K562 (cell line): ENCODE measurements at regions of chr1 and their contacts with region 1.

Region 1: GRCh38 chr1:26066857-26067256 is 573 bp downstream of the TRIM63 start:
- DNase-seq: peak; percentile 68 to 86 (median 73)
- ATAC-seq: peak; percentile 41
- H3K4me3 ChIP-seq: no peak overlapping the region
- H3K27ac ChIP-seq: peak overlapping the region; percentile 1; the same call in 2 of the 3 replicates
- H3K4me1 ChIP-seq: peaks cover 50 to 55% of the 10 kb centered on the region in 2 experiments
- H3K27me3 ChIP-seq: no peaks in the 10 kb centered on the region
- CTCF ChIP-seq: no peak
- EP300 ChIP-seq: peak; percentile 34; the same call in 1 of the 2 replicates
- POLR2A ChIP-seq: no peak
- RAD21 ChIP-seq: no peak

Region 2: GRCh38 chr1:26035959-26036755 is 30.7 kb before region 1 on chr1:
- CTCF ChIA-PET with region 1: no interaction called
- POLR2A ChIA-PET with region 1: interaction called, 6 read pairs
- in situ Hi-C with region 1: no loop called
- intact Hi-C with region 1: loop called (anchors 1 kb)
- DNase-seq: peak; percentile 91 to 94 (median 92)
- ATAC-seq: peak; percentile 92
- H3K4me3 ChIP-seq: peak overlapping the region; percentile 77
- H3K27ac ChIP-seq: peak overlapping the region; percentile 87
- H3K4me1 ChIP-seq: peaks cover 25 to 57% of the 10 kb centered on the region in 2 experiments
- H3K27me3 ChIP-seq: no peaks in the 10 kb centered on the region
- CTCF ChIP-seq: peak; percentile 97 to 99 (median 98)
- EP300 ChIP-seq: no peak; the same call in 1 of the 2 replicates
- POLR2A ChIP-seq: no peak
- RAD21 ChIP-seq: peak; percentile 99

Region 3: DNA sequence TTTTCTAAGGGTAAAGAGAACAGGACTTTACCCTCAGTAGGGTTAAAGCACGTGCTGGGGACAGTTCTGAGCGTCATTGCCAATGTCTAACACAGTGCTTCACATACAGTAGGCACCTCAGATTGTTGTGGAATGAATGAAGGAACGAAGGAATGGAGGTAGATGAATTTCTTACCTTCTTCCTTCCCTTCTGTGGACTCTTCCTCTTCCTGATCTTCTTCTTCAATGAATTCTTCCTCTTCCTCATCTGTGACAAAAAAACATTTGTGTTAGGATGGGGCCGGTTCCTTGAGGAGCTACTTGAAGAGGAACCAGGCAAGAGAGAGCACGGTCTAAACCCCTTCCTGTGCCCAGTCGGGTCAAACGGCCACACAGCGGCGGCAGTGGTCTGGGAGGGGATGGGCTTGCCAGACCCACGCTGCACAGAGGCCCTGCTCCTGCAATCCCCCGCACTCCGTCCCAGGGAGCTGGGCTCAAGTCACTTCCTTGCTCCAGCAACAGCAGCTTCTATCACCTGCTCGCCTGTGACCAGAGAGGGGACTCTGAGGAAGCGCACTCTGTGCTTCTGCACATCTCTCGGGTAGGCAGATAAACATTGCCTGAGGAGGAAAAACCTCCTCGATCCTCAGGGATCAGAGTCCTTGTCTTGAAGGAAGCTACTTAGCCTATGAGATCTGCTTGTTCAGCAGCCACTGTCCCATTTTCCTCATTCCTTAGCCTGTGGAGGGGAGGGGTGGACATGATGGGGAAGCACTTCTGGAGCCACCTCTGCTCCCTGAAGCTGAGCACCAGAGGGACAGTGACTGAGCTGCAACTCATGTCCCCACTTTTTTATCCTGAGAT is 12.9 kb before region 1 on chr1:
- CTCF ChIA-PET with region 1: no interaction called
- POLR2A ChIA-PET with region 1: interaction called, 28 read pairs
- in situ Hi-C with region 1: no loop called
- intact Hi-C with region 1: no loop called
- DNase-seq: peak; percentile 45 to 55 (median 46)
- ATAC-seq: peak; percentile 69
- H3K4me3 ChIP-seq: no peak overlapping the region
- H3K27ac ChIP-seq: no peak overlapping the region
- H3K4me1 ChIP-seq: peaks cover 14 to 21% of the 10 kb centered on the region in 2 experiments
- H3K27me3 ChIP-seq: no peaks in the 10 kb centered on the region
- CTCF ChIP-seq: peak in 2 of 3 experiments; percentile 14 to 25; a peak in 2 of 6 replicates
- EP300 ChIP-seq: no peak
- POLR2A ChIP-seq: no peak
- RAD21 ChIP-seq: peak in 1 of 2 experiments; percentile 48; a peak in 2 of 4 replicates

Region 4: DNA sequence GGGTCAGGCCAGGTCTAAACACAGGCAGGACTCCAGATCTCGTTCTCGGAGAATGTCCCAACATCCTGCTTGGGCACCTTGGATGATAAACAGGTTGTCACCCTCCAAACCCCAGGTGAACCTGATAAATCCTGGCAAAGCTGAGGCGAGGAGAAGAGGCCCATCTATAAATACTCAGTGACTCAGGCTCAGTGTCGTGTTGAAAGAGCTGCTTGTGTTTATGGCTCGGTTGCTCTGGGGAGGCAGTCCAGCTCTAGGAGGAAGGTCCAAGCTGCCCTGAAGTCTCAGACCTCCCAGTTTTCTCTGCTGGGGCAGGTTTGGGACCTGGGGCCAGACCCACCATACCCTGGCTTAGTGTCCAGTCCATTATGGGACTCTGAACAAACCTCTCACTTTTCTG is 16.4 kb after region 1 on chr1:
- CTCF ChIA-PET with region 1: no interaction called
- POLR2A ChIA-PET with region 1: interaction called, 33 read pairs
- in situ Hi-C with region 1: no loop called
- intact Hi-C with region 1: no loop called
- DNase-seq: no peak
- ATAC-seq: peak; percentile 11; the same call in 1 of the 3 replicates
- H3K4me3 ChIP-seq: no peak overlapping the region
- H3K27ac ChIP-seq: no peak overlapping the region
- H3K4me1 ChIP-seq: peaks cover 16 to 42% of the 10 kb centered on the region in 2 experiments
- H3K27me3 ChIP-seq: no peaks in the 10 kb centered on the region
- CTCF ChIP-seq: no peak
- EP300 ChIP-seq: no peak
- POLR2A ChIP-seq: no peak
- RAD21 ChIP-seq: no peak

Region 5: DNA sequence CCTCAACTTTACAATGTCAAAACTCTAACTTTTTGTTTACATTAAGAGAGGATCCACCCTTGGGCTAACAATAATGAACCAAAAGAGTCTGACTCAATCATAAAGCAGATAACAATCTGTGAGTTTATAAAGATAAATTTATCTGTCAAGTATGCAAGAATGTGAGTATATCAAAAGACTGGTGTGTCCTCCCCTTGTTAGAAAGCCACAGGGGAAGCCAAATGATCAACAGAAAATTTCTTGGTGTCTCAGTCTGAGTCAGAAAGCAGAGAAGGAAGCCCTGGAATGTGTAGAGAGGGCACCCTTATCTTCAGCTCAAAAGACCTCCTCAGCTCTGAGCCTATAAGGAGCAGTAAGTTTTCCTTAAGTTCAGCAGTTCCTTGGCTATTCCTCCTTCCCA is 30.8 kb after region 1 on chr1:
- CTCF ChIA-PET with region 1: no interaction called
- POLR2A ChIA-PET with region 1: interaction called, 6 read pairs
- in situ Hi-C with region 1: no loop called
- intact Hi-C with region 1: loop called (anchors 2 kb)
- DNase-seq: peak in 1 of 4 experiments; percentile 40
- ATAC-seq: peak; percentile 10; the same call in 1 of the 3 replicates
- H3K4me3 ChIP-seq: no peak overlapping the region
- H3K27ac ChIP-seq: no peak overlapping the region
- H3K4me1 ChIP-seq: peaks cover 15 to 35% of the 10 kb centered on the region in 2 experiments
- H3K27me3 ChIP-seq: no peaks in the 10 kb centered on the region
- CTCF ChIP-seq: no peak
- EP300 ChIP-seq: no peak
- POLR2A ChIP-seq: no peak
- RAD21 ChIP-seq: no peak

Region 6: DNA sequence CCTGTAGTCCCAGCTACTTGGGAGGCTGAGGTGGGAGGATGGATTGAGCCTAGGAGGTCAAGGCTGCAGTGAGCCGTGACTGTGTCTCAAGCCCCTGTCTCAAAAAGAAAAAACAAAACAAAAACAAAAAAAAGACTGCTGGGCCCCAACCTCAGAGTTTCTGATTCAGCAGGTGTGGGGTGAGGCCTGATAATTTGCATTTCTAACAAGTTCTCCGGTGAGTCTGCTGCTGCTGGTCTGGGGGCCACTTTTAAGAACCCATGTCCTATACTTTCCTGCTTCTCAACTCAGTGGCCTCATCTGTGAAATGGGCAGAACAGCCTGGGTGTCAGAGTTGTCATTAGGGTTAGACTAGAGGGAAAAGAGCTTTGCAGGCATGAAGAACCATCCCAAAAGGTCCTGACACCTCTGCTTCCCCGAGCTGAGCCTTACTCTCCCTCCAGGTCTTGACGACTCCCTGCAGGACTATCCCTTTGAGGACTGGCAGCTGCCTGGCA is 113.2 kb after region 1 on chr1:
- CTCF ChIA-PET with region 1: no interaction called
- POLR2A ChIA-PET with region 1: no interaction called
- in situ Hi-C with region 1: no loop called
- intact Hi-C with region 1: no loop called
- DNase-seq: no peak
- ATAC-seq: no peak
- H3K4me3 ChIP-seq: no peak overlapping the region
- H3K27ac ChIP-seq: no peak overlapping the region
- H3K4me1 ChIP-seq: peaks cover 17 to 31% of the 10 kb centered on the region in 2 experiments
- H3K27me3 ChIP-seq: no peaks in the 10 kb centered on the region
- CTCF ChIP-seq: no peak
- EP300 ChIP-seq: no peak
- POLR2A ChIP-seq: no peak
- RAD21 ChIP-seq: no peak

Region 7: DNA sequence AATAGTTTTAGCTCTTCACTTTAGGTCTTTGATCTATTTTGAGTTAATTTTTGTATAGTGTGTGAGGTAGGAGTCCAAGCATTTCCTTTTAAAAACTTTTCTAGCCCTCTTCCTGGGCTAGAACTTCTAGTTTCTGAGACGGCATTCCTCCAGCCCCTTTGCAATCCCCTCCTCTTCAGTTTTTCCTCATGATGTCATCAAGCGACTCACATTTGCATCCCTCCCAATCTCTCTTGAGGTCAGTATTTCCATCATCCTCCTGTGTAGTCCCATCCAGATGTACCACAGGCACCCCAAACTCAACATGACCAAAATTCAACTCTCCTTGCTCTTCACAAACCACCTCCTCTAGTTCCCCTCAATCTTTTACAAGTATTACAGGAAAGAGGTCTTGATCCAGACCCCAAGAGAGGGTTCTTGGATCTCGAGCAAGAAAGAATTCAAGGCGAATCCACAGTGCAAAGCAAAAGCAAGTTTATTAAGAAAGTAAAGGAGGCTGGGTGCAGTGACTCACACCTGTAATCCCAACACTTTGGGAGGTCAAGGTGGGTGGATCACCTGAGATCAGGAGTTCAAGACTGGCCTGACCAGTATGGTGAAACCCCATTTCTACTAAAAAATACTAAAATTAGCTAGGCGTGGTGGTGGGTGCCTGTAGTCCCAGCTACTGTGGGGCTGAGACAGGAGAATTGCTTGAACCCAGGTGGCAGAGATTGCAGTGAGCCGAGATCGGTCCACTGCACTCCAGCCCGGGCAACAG is 416.2 kb after region 1 on chr1:
- CTCF ChIA-PET with region 1: no interaction called
- POLR2A ChIA-PET with region 1: no interaction called
- in situ Hi-C with region 1: no loop called
- intact Hi-C with region 1: no loop called
- DNase-seq: no peak
- ATAC-seq: no peak
- H3K4me3 ChIP-seq: no peak overlapping the region
- H3K27ac ChIP-seq: no peak overlapping the region
- H3K4me1 ChIP-seq: peaks cover 15 to 16% of the 10 kb centered on the region in 2 experiments
- H3K27me3 ChIP-seq: no peaks in the 10 kb centered on the region
- CTCF ChIP-seq: no peak
- EP300 ChIP-seq: no peak
- POLR2A ChIP-seq: no peak
- RAD21 ChIP-seq: no peak